ENCODE measurements at regions of chr7 and their contacts with region 1.

Region 1: GRCh38 chr7:5450549-5451372 is 27.1 kb upstream of the TNRC18 start:
- ATAC-seq: peak; percentile 17 to 89 (median 83)
- H3K4me3 ChIP-seq: no peak overlapping the region
- H3K27ac ChIP-seq: peak overlapping the region; percentile 4 to 68
- H3K4me1 ChIP-seq: peaks cover 41 to 46% of the 10 kb centered on the region in 2 donors

Region 2: GRCh38 chr7:4753711-4754432 is 696.9 kb before region 1 on chr7:
- in situ Hi-C with region 1: no loop called
- ATAC-seq: peak; percentile 86 to 97 (median 91)
- H3K4me3 ChIP-seq: no peak overlapping the region
- H3K27ac ChIP-seq: no peak overlapping the region
- H3K4me1 ChIP-seq: peaks cover 0 to 3% of the 10 kb centered on the region in 2 donors

Region 3: DNA sequence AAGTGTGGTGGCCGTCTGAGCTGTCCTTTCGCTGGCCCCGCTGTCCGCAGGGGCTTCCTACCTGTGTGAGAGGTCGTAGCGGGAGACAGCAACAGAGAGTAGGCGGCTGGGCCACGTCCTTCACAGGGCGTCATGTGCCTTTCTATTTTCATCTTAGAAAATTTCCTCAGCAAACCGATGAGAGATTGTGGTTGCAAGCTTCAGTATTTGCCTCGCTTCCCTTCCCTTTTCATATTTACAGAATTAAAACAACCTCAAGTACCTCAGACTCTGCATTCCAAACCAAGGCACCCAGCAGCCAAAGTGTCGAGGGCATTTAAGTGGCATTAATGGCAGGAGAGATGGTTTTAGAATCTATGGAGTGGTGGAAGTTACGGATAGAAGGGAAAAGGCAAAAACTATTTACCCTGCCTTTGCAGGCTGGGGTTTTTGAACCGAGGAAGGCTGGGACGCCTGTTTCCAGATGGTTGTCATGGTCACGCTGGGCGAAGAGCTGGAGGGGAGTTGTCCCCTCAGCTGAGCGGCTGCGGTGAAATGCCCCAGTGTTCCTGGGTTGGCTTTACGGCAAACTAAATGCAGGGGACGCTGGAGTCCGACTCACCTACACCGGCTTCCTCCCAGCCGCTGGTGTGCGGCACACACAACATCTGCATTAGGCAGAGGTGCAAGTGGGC is 218.8 kb before region 1 on chr7:
- in situ Hi-C with region 1: loop called in 4 of 9 experiments (anchors 25 kb)
- ATAC-seq: peak in 2 of 8 experiments; percentile 23 to 37
- H3K4me3 ChIP-seq: no peak overlapping the region
- H3K27ac ChIP-seq: no peak overlapping the region
- H3K4me1 ChIP-seq: peaks cover 0 to 26% of the 10 kb centered on the region in 2 donors

Measured in motor neuron (in vitro differentiated cells).